ENCODE measurements at regions of chr14 and their contacts with region 1.

Region 1: GRCh38 chr14:32576088-32576795 is 247.1 kb downstream of the AKAP6 start:
- DNase-seq: no peak
- H3K4me3 ChIP-seq: no peak overlapping the region
- CTCF ChIP-seq: peak; percentile 88

Region 2: DNA sequence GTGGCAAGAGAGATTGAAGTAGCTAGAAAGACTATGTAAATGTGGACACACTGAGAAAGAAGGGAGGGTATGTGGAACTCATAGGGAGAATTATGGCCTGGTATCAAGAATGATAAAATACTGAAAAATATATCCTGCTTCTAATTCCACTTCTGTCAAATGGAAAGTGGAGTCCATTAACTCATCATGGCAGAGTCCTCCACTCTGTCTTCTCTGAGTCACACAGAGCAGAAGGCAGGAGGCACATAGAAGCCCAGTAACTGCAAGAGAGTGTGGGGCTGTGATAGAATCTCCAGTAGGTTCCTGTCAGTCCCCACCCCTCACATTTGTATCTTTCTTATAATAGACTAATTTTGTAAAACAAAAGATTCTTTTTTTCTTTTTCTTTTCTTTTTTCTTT is 23.5 kb before region 1 on chr14:
- CTCF ChIA-PET with region 1: no interaction called
- POLR2A ChIA-PET with region 1: no interaction called
- DNase-seq: no peak
- H3K4me3 ChIP-seq: no peak overlapping the region
- CTCF ChIP-seq: no peak

Region 3: DNA sequence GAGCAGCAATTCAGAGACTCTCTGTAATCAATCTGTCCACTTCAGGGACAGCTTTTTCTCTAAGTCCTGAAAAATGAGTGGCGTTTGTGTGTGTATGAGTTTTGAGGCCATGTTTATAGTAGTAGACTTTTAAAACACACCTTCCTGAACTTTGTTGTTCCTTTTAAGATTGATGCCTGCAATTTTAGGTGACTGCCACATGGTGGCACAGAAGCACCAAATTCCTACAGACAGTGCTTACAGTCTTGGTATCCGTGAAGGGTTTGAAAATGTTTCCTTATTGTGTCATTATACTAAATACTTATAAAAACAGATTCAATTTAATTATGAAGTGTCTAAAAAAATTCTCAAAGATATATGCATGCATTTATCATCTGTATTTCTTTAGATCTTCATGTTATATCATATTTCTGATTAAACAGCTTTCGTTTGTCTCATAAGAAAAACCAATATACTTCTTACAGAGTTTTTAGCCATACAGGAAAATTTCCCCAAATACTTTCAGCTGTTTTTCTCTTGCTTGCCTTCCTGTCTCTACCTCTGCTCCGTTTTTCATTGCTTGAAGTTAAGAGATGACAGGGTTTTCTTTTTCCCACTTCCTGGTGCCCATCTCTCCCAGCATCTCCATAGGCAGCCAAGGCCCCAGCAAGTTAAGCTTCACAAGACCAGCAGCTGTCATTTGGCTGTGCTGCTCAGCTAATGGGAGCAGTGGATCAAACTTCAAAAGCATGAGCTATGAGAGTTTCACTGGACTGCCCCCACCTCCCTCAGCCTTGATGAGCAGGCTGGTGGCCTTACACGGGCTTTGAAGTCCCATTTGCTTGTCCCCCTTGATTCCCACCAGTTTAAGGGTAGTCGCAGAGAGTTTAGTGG is 12.4 kb after region 1 on chr14:
- CTCF ChIA-PET with region 1: interaction called, 31 read pairs
- POLR2A ChIA-PET with region 1: no interaction called
- DNase-seq: no peak
- H3K4me3 ChIP-seq: no peak overlapping the region
- CTCF ChIP-seq: peak; percentile 55

Region 4: DNA sequence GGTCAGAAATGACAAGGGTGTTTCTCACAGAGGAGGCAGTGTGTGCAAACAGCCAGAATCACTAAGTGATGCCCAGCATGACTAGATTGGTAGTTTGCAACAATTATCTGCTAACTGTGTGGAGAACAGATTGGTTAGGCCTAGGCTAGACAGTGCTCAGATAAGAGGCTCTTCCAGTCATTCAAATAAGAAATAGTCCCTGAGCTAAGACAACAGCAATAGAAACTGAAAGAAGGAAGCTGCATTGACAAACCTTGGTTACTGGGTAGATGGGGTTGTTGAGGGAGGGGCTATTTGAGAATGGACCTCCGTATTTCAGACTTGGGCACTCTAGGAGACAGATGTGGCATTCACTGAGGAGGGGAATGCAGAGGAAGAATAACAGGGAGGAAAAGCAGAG is 107.4 kb after region 1 on chr14:
- CTCF ChIA-PET with region 1: no interaction called
- POLR2A ChIA-PET with region 1: no interaction called
- DNase-seq: no peak
- H3K4me3 ChIP-seq: no peak overlapping the region
- CTCF ChIP-seq: no peak